Transverse colon (tissue), 4 donors: ENCODE measurements at regions of chr17 and their contacts with region 1.

Region 1: DNA sequence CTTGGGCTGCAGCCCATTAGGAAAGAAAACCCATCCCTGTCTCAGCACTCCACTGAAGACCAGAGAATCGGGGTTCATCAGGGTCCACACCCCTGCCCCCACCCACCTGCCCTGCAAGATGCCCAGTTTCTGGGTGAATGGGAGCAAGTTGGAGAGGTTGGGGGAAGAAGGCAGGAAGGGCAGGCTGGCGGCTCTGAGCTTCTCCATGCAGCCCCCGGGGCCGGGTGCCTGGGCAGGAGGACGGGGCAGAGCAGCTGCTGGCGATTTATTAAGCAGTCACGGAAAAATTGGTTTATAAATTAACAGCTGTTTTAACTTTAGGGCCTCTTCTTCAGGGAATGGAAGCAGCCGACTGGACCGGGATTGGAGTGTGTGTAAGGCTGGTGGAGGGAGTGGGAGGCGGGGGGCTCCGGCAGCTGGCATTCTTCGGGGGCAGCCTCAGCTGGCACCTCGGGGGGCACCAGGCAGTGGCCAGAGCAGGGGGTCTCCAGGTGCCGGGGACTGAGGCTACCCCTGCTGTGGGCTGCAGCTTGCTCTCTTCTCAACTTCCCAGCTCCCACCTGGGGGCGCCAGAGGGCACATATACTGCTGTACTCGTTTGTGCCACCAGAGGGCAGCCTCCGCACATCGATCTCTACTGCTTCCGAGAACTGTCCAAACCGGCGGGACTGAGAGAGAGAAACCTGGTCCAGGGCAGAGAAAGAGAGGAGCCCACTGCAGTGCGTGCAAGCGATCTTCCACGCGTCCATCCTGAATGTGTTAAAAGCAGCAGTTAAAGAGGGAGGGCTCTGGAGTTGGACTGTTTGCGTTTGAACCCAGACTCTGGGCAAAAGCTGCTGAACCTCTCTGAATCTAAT is 5.0 kb upstream of the PPP1R1B start:
- DNase-seq: peak; percentile 90
- H3K4me3 ChIP-seq: no peak overlapping the region
- H3K27ac ChIP-seq: peak overlapping the region in 2 of 4 donors; percentile 7 to 50
- H3K4me1 ChIP-seq: peaks cover 23 to 53% (median 43%) of the 10 kb centered on the region in 4 donors
- H3K27me3 ChIP-seq: peaks cover 27% of the 10 kb centered on the region
- CTCF ChIP-seq: peak; percentile 99 to 100 (median 100)
- EP300 ChIP-seq: no peak
- POLR2A ChIP-seq: no peak

Region 2: GRCh38 chr17:39663688-39664616 is 42.2 kb after region 1 on chr17:
- in situ Hi-C with region 1: no loop called
- intact Hi-C with region 1: no loop called
- DNase-seq: peak; percentile 67
- H3K4me3 ChIP-seq: no peak overlapping the region
- H3K27ac ChIP-seq: peak overlapping the region; percentile 58 to 82 (median 64)
- H3K4me1 ChIP-seq: peaks cover 37 to 61% (median 48%) of the 10 kb centered on the region in 4 donors
- H3K27me3 ChIP-seq: peaks cover 34% of the 10 kb centered on the region
- CTCF ChIP-seq: no peak
- EP300 ChIP-seq: no peak
- POLR2A ChIP-seq: no peak

Region 3: DNA sequence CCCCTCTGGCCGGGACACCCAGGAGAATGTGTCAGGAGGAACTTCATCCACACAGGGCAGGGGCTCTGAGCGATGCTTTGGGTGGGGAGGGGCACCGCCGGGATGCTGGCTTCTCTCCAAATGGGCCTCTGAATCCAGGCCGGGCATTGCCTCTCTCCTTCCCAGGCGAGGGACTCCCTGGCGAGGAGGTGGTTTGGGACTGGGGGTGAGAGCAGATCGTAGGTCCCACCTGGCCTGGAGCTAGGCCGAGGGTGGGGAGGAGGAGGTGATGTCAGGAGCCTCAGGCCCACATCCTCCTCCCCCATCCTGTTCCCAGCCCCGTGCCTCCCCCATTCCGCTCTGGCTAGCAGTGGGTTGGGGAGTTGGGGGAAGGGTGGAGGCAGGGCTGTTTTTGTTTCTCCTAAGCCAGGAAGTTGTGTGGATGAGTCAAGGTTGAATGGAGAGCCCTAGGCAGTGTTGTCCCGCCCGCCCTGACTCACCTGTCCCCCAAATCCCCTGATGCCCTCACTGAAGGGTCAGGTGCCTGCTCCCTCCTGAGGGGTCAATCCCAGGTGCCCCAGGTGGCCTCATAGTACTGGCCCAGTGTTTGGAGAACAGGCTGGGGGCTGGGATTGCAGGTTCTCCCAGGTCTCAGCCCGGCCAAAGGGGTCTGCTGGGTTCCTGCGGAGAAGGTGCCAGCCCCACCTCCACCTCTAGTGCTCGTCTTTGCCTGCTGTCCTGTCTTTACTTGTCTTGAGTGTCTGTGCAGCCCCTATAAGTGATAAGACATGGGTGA is 118.8 kb after region 1 on chr17:
- in situ Hi-C with region 1: loop called in 2 of 4 experiments (anchors 10 to 25 kb)
- intact Hi-C with region 1: no loop called
- DNase-seq: peak; percentile 60
- H3K4me3 ChIP-seq: peak overlapping the region in 3 of 4 donors; percentile 42 to 63 (median 50)
- H3K27ac ChIP-seq: peak overlapping the region; percentile 83 to 92 (median 90)
- H3K4me1 ChIP-seq: peaks cover 5 to 55% (median 32%) of the 10 kb centered on the region in 4 donors
- H3K27me3 ChIP-seq: peaks cover 39% of the 10 kb centered on the region
- CTCF ChIP-seq: no peak
- EP300 ChIP-seq: no peak
- POLR2A ChIP-seq: peak; percentile 29

Region 4: GRCh38 chr17:39754161-39754951 is 132.6 kb after region 1 on chr17:
- in situ Hi-C with region 1: loop called (anchors 10 to 25 kb)
- intact Hi-C with region 1: no loop called
- DNase-seq: peak; percentile 97
- H3K4me3 ChIP-seq: peak overlapping the region; percentile 60 to 91 (median 71)
- H3K27ac ChIP-seq: peak overlapping the region; percentile 91 to 98 (median 96)
- H3K4me1 ChIP-seq: peaks cover 6 to 24% (median 14%) of the 10 kb centered on the region in 4 donors
- H3K27me3 ChIP-seq: peaks cover 4% of the 10 kb centered on the region
- CTCF ChIP-seq: peak; percentile 94 to 99 (median 99)
- EP300 ChIP-seq: no peak
- POLR2A ChIP-seq: peak; percentile 86

Region 5: DNA sequence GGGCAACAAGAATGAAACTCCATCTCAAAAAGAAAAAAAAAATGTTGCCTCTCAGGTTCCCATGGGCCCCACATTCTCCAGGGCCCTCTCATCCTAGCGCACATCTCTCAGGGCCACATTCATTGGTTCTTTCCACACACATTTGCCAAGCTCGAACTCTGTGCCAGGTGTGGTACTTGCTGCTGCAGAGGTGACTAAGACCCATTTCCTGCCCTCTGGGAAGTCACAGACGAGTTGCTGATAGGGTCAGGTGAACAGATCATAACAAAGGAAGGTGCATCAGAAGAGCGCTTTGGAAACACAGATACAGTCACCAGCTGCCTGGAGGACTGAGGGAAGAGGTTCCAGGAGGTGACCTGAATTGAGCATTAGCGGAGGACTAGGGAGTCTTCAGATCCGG is 342.1 kb after region 1 on chr17:
- in situ Hi-C with region 1: no loop called
- intact Hi-C with region 1: no loop called
- DNase-seq: no peak
- H3K4me3 ChIP-seq: no peak overlapping the region
- H3K27ac ChIP-seq: no peak overlapping the region
- H3K4me1 ChIP-seq: peaks cover 0 to 17% (median 13%) of the 10 kb centered on the region in 4 donors
- H3K27me3 ChIP-seq: no peaks in the 10 kb centered on the region
- CTCF ChIP-seq: no peak
- EP300 ChIP-seq: no peak
- POLR2A ChIP-seq: no peak